Left ventricle myocardium inferior (tissue), 1 donor: ENCODE measurements at regions of chr15 and their contacts with region 1.

Region 1: GRCh38 chr15:52326756-52327155 is 31.2 kb upstream of the MYO5C start:
- DNase-seq: no peak
- H3K4me3 ChIP-seq: no peak overlapping the region
- H3K27ac ChIP-seq: no peak overlapping the region
- H3K4me1 ChIP-seq: no peaks in the 10 kb centered on the region
- H3K27me3 ChIP-seq: no peaks in the 10 kb centered on the region
- CTCF ChIP-seq: no peak

Region 2: DNA sequence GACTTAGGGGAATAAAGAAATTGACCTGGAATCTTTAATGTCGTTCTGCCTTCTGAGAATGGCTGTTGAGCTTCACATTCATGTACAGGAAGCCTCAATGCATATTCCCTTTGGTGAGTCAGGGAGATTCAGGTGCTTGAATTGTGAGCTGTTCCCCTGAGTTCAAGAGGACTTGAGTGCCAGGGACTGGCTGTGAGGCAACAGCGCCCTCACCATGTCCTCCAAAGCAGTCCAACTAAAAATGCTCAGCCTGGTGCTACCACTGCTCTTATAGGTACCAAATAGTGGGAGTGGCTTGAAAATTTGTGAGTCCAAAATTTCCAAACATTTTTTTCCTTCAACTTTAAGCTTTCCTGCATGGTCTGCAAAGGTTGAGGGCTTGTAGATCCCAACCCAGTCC is 409.3 kb before region 1 on chr15:
- intact Hi-C with region 1: no loop called
- DNase-seq: no peak
- H3K4me3 ChIP-seq: no peak overlapping the region
- H3K27ac ChIP-seq: no peak overlapping the region
- H3K4me1 ChIP-seq: no peaks in the 10 kb centered on the region
- H3K27me3 ChIP-seq: no peaks in the 10 kb centered on the region
- CTCF ChIP-seq: peak; percentile 24

Region 3: GRCh38 chr15:52261498-52262242 is 65.1 kb before region 1 on chr15:
- intact Hi-C with region 1: loop called (anchors 10 kb)
- DNase-seq: peak; percentile 50
- H3K4me3 ChIP-seq: no peak overlapping the region
- H3K27ac ChIP-seq: peak overlapping the region; percentile 66
- H3K4me1 ChIP-seq: peaks cover 32% of the 10 kb centered on the region
- H3K27me3 ChIP-seq: no peaks in the 10 kb centered on the region
- CTCF ChIP-seq: peak; percentile 37